ENCODE measurements at regions of chr17 and their contacts with region 1.

Region 1: DNA sequence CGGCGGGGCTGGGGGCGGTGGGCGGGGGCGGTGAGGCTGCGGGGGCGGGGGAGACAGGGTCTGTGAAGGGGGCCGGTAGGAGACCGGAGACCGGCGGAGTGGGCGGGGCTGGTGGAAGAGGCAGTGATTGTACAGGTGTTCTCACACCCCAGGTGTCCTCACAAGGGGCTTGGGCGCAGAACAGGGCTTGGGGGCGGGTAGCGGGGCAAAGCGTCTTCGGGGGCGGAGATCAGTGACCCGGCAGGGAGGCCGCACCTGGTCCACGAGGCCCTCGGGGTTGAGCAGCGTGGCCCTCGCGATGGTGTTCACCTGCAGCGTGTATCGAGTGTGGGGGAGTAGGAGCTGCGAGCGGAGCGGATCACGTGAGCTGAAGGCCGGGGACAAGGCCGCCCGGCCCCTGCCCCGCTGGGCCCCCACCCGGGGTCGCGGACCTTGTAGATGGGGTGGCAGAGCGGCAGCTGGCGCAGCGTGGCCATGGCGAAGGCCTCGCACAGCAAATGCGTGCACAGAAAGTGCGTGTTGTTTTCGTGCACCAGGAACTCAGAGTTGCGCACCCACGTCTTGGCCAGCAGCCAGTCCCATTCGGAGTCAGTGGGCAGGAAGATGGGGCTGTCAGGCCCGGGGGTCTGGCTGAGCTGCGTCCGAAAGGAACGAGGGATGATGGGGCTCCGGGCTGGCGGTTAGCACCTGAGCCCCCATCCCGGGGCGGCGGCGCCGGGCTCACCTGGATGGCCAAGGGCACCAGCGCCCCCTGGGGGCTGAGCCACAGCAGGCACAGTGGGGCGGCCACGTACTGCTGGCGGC is 8.5 kb downstream of the ALOXE3 start:
- DNase-seq: peak; percentile 82
- H3K4me3 Mint-ChIP-seq: peak overlapping the region; percentile 46
- H3K27ac Mint-ChIP-seq: no peak overlapping the region
- H3K4me1 Mint-ChIP-seq: peaks cover 24% of the 10 kb centered on the region
- H3K27me3 Mint-ChIP-seq: peaks cover 42% of the 10 kb centered on the region
- CTCF ChIP-seq: peak; percentile 76

Region 2: DNA sequence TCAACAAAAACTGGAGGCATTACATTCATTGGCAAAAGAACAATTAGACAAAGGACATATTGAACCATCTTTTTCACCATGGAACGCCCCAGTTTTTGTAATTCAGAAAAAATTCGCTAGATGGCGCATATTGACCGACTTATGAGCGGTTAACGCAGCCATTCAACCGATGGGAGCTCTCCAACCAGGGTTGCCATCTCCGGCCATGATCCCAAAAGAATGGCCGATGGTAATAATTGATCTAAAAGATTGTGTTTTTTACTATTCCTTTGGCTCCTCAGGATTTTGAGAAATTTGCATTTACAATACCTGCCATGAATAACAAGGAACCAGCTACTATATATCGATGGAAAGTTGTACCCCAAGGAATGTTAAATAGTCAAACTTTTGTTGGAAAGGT is 49.6 kb before region 1 on chr17:
- CTCF ChIA-PET with region 1: interaction called, 11 read pairs
- intact Hi-C with region 1: loop called (anchors 5 kb)
- DNase-seq: peak; percentile 67
- H3K4me3 Mint-ChIP-seq: no peak overlapping the region
- H3K27ac Mint-ChIP-seq: no peak overlapping the region
- H3K4me1 Mint-ChIP-seq: peaks cover 25% of the 10 kb centered on the region
- H3K27me3 Mint-ChIP-seq: peaks cover 75% of the 10 kb centered on the region
- CTCF ChIP-seq: peak; percentile 23